ENCODE measurements at regions of chr6 and their contacts with region 1.

Region 1: GRCh38 chr6:109705258-109705657 is 14.2 kb downstream of the FIG4 start:
- DNase-seq: peak; percentile 72 to 92 (median 81)
- ATAC-seq: peak; percentile 100
- H3K4me3 ChIP-seq: no peak overlapping the region
- H3K4me1 ChIP-seq: no peaks in the 10 kb centered on the region
- CTCF ChIP-seq: peak; percentile 82

Region 2: DNA sequence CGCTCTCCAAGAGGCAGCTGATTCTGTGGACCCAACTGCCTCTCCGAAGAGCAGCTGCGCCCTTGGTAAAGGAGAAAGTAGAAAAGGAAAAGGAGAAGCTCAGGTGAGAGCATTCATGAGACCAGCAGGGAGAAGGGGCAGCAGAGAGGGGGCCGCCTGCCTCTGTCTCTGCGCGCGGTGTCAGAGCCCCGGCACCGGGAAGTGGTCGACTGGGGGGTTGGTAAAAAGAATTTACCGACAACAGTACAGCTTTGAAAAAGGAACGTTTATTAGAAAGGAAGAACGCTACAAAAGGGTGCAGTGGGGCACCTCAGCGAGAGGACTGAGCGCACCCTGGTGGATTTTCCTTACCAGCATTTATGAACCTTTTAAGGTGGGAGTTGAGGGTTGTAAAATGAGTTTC is 334.7 kb after region 1 on chr6:
- intact Hi-C with region 1: loop called in 1 of 2 experiments (anchors 5 kb)
- DNase-seq: peak in 2 of 3 donors; percentile 47 to 67
- ATAC-seq: peak; percentile 77
- H3K4me3 ChIP-seq: no peak overlapping the region
- H3K4me1 ChIP-seq: no peaks in the 10 kb centered on the region
- CTCF ChIP-seq: no peak

Region 3: GRCh38 chr6:110053395-110054240 is 348.4 kb after region 1 on chr6:
- intact Hi-C with region 1: loop called in 1 of 2 experiments (anchors 5 kb)
- DNase-seq: peak in 1 of 3 donors; percentile 38
- ATAC-seq: peak; percentile 51
- H3K4me3 ChIP-seq: no peak overlapping the region
- H3K4me1 ChIP-seq: no peaks in the 10 kb centered on the region
- CTCF ChIP-seq: peak; percentile 47

Region 4: DNA sequence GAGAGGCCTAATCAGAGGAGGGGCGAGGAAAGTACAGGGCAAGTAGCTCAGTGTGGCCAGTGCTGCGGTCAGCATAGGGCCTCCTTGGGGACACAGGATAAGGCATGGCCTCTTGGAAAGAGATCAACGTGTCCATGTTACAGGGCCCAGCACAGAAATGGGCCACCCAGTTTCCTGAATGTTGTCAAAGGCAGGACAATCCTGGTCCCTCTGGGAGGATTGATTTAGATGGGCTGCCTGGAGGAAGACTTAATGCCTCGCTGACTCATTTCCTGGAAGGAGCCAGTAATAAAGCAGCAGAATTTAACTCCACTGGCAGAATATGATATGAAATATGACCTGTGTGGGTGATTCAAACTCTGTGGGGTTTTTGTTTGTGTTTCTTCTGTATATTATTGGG is 693.5 kb after region 1 on chr6:
- intact Hi-C with region 1: loop called (anchors 10 kb)
- DNase-seq: no peak
- ATAC-seq: no peak
- H3K4me3 ChIP-seq: no peak overlapping the region
- H3K4me1 ChIP-seq: no peaks in the 10 kb centered on the region
- CTCF ChIP-seq: no peak

Measured in mucosa of descending colon (tissue), 3 donors.